Dendritic cell treated with granulocyte-macrophage colony-stimulating factor and Interleukin-4, amounts not matched to agents 40 ng/mL and 50 ng/mL, for 4 days (primary cell): ENCODE measurements at regions of chr3 and their contacts with region 1.

Region 1: DNA sequence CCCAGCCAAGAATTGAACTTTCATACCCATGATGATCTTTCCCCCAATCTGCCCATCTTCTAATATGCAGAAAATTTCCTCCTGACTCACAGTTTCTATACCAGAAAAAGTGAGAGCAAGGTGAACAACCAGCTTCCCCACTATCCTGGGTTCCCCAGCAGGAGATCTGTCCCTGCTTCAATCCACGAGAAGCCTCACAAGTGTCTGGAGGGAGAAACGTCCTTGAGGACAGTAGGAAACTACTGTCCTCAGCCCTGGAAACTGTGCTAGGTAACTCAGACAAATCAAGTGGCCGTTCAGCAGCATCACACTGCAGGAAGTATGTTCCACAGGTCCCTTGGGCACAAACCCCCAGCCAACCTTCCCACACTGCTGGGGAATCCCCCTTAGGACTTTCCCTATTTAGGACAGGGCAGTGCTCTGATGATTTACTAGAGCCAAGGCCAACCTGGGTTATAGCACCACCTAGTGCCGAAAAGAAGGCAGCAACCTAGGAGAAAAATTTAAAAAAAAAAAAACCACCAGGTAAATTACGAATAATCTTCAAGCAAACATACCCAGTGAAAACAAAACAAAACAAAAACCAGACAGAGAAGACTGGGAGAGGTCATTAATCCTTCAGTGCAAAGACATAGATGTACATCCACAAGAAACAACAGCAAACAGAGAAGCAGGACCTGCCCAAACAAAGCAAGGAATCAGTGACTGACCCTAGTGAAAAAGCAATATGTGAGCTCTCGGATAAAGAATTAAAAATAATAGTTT is 36.0 kb downstream of the MORC1 start:
- H3K4me3 Mint-ChIP-seq: no peak overlapping the region
- H3K27ac Mint-ChIP-seq: peak overlapping the region; percentile 48
- H3K4me1 Mint-ChIP-seq: peaks cover 6% of the 10 kb centered on the region
- H3K27me3 Mint-ChIP-seq: peaks cover 1% of the 10 kb centered on the region

Region 2: DNA sequence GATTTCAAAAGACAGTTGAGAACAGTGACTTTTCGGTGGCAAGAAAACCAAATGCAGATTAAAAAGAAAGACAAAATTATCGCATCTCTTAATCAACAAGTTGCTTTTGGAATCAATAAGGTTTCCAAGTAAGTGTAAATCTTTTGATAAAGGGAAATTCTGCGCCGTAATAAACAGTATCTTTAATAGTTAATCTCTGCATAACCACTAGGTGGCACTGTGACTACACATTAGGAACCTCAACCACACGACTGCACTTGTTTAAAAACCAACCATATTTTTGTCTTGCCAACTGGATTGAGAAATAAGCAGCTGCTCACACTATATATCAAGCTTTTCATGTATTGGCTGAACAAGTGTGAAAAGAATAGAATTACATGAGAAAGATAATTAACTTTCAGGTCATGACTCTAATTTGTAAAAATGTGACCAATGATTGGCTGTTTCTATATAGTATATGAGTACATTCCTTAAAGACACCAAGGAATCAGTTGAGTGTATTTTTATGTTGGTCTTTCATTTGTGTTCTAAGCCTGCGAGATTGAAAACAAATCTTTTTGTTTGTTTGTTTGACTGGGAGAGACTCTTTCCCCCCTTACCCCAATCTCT is 419.7 kb before region 1 on chr3:
- intact Hi-C with region 1: loop called (anchors 1 kb)
- H3K4me3 Mint-ChIP-seq: no peak overlapping the region
- H3K27ac Mint-ChIP-seq: no peak overlapping the region
- H3K4me1 Mint-ChIP-seq: no peaks in the 10 kb centered on the region
- H3K27me3 Mint-ChIP-seq: no peaks in the 10 kb centered on the region

Region 3: DNA sequence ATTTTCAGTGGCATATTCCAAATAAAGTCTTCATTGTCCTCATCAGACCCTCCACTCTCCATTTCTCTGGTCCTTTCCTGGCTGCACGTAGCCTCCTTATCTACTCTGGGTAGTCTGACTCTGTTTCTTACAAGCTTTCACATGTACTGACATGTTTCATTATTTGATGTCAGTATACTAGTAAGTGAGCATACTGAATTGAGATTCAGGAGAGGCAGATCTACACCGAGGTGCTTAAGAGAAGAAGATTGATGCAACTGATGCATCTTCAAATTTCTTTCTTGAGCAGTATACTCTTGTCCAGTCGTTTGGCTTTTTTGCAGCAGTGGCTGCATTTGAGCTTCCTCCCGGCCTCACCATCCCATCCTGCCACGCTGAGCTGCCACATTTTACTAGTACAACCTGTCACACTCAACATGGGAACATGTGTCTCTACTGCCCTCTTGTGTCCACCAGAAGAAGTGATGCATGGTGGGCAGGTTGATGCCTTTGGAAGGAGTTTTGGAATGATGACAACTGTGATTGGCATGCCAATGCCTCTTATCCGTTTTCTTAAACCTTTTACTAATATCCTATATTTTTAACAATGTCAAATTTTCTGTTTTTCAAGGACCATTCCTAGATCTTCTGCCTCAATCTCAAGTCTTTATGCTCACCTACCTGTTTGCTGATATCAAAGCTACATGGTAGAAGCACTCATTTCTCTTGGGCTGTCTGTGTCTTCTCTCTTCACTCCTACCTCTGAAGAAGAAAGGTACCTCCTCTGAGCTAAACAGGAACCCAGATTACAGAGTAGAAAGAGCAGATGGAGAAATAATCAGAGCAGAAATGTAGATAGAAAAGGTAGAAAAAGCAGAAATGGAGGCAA is 166.9 kb before region 1 on chr3:
- intact Hi-C with region 1: loop called (anchors 5 kb)
- H3K4me3 Mint-ChIP-seq: no peak overlapping the region
- H3K27ac Mint-ChIP-seq: no peak overlapping the region
- H3K4me1 Mint-ChIP-seq: no peaks in the 10 kb centered on the region
- H3K27me3 Mint-ChIP-seq: no peaks in the 10 kb centered on the region

Region 4: GRCh38 chr3:109023656-109024254 is 58.2 kb before region 1 on chr3:
- intact Hi-C with region 1: loop called (anchors 1 kb)
- H3K4me3 Mint-ChIP-seq: no peak overlapping the region
- H3K27ac Mint-ChIP-seq: no peak overlapping the region
- H3K4me1 Mint-ChIP-seq: no peaks in the 10 kb centered on the region
- H3K27me3 Mint-ChIP-seq: no peaks in the 10 kb centered on the region

Region 5: DNA sequence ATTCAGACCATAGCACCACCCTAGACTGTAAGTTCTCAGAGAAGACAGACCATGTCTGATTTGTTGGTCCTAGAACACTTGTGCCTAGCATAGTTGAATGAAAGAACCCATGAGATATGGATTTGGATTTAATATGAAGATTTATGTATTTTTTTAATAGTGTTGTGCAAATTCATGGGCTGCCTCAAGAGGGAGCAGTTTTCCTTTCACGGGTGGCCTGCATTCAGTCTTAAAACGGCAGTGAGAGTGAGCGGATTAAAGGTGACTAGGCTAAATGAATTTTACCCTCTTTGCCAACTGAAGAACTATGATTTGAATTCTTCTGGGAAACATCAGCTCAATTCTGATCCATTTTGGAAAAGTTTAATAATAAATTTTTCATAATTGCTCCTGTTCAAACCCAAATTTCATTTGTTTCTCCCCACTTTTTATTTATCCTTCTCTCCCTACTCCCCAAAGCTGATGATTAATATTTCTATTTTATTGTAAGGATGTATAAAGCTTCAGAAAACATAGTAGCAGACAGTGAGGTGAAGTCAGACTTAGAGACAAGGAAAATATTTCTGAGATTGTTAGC is 31.2 kb before region 1 on chr3:
- intact Hi-C with region 1: loop called (anchors 1 kb)
- H3K4me3 Mint-ChIP-seq: no peak overlapping the region
- H3K27ac Mint-ChIP-seq: no peak overlapping the region
- H3K4me1 Mint-ChIP-seq: peaks cover 5% of the 10 kb centered on the region
- H3K27me3 Mint-ChIP-seq: no peaks in the 10 kb centered on the region

Region 6: DNA sequence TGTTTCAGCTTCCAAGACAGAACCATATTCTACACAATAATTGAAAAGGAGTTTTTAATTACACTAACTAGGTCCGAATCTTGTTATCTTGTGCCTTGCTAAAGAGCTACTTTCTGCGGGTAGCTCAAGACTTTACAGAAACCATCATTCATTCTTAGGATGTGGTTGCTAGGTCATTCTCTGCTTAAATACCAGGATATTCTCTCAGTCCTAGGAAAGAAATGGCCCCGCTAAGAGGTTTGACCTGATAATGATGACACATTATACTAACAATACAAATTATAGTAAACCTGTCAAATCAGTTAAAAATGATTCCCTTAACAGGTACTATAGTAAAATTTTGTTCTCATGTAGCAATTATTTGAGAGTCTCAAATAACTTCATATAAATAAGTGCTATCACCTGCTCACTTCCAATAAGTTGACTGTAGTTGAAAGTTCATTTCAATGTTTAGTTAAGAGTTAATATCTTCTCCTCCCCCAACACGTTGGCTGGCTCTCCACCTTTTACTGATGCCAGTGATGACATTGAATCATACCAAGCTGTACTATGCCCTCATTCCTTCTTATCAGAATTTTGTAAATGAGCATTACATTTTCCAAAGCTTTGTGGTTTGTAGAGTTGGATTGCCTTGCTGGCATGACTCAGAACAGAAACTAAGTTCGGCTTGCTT is 51.0 kb after region 1 on chr3:
- intact Hi-C with region 1: no loop called
- H3K4me3 Mint-ChIP-seq: no peak overlapping the region
- H3K27ac Mint-ChIP-seq: no peak overlapping the region
- H3K4me1 Mint-ChIP-seq: no peaks in the 10 kb centered on the region
- H3K27me3 Mint-ChIP-seq: no peaks in the 10 kb centered on the region